ENCODE measurements at regions of chr6 and their contacts with region 1.

Region 1: DNA sequence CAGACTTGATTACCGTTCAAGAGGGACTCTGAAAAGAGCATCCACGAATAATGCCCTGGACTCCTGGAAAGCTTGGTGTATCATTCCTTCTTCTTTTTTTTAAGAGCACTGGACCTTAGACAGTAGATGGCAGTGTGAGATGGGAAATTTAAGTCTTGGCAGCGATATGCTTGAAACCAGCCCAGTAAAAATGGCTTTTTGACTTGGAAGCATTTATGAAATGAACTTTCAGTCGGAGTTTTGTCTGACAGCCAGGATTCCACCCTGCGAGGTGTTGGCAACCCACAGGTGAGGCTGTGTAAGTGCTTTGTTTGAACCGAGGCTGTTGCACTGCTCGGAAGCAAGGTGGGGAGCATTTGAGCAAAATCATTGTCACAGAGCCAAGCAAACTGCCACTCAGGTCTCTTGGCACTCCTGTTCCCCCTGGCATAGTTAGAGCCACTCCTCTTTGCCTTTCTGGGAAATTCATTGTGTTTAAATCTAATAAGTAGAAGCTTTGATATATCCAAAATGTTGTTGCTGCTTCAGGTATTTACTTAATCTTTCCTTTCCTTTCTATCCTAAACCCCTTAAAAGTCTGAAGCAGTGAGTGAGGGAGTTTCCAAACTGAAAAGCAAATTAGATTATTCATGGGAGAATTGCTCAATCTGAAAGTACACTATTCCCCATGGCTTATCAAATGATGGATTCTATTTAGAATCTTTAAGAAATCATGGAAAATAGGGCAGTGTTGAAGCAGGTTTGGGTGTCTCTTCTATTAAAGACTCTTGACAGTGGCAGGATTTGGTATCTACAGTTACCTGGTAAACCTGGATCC is 272.8 kb upstream of the SLC35B3 start:
- DNase-seq: peak; percentile 48
- ATAC-seq: peak; percentile 92
- H3K4me3 ChIP-seq: peak overlapping the region in 1 of 2 experiments; percentile 28; a peak in 2 of 4 replicates
- H3K27ac ChIP-seq: no peak overlapping the region
- H3K4me1 ChIP-seq: peaks cover 0 to 5% of the 10 kb centered on the region in 2 experiments; a peak in 2 of 4 replicates
- H3K27me3 ChIP-seq: no peaks in the 10 kb centered on the region
- CTCF ChIP-seq: peak; percentile 45 to 61 (median 49); a peak in 5 of 6 replicates
- POLR2A ChIP-seq: no peak
- RAD21 ChIP-seq: peak; percentile 76

Region 2: DNA sequence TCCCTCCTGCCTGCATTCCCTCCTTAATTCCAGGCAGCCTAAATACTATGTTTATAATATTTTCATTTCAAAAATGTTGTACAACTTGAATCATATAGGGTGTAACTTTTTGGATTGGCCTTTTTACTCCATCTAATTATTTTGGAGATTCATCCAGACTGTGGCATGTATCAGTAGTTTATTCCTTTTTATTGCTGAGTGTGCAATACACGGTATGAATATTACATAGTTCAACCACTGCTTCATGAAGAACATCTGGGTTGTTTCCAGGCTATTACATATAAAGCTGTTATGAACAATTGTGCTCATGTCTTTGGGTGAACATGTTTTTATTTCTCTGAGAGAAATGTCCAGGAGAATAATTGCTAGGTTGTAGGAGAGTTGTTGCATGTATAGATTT is 19.3 kb before region 1 on chr6:
- CTCF ChIA-PET with region 1: no interaction called
- POLR2A ChIA-PET with region 1: no interaction called
- RAD21 ChIA-PET with region 1: no interaction called
- intact Hi-C with region 1: no loop called
- DNase-seq: no peak
- ATAC-seq: no peak
- H3K4me3 ChIP-seq: no peak overlapping the region
- H3K27ac ChIP-seq: no peak overlapping the region
- H3K4me1 ChIP-seq: no peaks in the 10 kb centered on the region
- H3K27me3 ChIP-seq: no peaks in the 10 kb centered on the region
- CTCF ChIP-seq: no peak
- POLR2A ChIP-seq: no peak
- RAD21 ChIP-seq: no peak

Region 3: DNA sequence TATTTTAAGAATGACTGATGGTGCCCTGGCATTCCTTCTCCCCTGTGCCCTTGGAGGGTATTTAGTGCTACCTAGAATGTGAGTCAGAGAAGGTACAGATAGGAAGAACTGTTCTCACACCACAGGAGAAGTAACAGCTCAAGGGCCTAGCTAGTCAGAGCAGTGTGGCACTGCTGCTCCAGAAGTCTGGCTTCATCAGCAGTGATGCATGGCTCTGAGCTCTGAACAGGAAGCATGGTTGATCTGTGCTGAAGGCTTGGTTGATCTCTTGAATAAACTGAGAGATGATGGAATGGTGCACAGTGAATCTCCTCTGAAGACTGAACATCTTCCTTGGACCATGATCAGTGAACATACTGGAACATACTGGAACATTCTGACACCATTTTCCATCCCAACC is 152.5 kb after region 1 on chr6:
- CTCF ChIA-PET with region 1: no interaction called
- POLR2A ChIA-PET with region 1: no interaction called
- RAD21 ChIA-PET with region 1: no interaction called
- intact Hi-C with region 1: no loop called
- DNase-seq: no peak
- ATAC-seq: no peak
- H3K4me3 ChIP-seq: no peak overlapping the region
- H3K27ac ChIP-seq: no peak overlapping the region
- H3K4me1 ChIP-seq: no peaks in the 10 kb centered on the region
- H3K27me3 ChIP-seq: no peaks in the 10 kb centered on the region
- CTCF ChIP-seq: no peak
- POLR2A ChIP-seq: no peak
- RAD21 ChIP-seq: no peak

Region 4: DNA sequence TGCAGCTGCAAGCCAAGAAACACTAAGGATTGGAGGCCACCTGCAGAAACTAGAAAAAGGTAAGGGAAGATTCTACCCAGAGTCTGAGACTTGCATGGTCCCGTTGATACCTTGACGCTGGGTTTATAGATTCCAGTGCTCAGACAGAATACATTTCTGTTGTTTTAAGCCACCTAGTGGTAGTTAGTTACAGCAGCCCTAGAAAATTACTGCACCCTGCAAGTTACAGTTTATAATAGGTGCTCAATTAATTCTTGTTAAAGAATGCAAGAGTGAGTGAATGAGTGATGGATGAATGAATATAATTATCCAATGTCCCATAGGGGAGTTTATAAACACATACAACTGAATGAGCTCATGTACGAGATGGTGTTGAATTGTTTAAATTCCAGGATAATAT is 180.3 kb after region 1 on chr6:
- CTCF ChIA-PET with region 1: no interaction called
- POLR2A ChIA-PET with region 1: no interaction called
- RAD21 ChIA-PET with region 1: no interaction called
- intact Hi-C with region 1: loop called (anchors 5 kb)
- DNase-seq: peak; percentile 12
- ATAC-seq: peak; percentile 80
- H3K4me3 ChIP-seq: no peak overlapping the region
- H3K27ac ChIP-seq: no peak overlapping the region
- H3K4me1 ChIP-seq: no peaks in the 10 kb centered on the region
- H3K27me3 ChIP-seq: no peaks in the 10 kb centered on the region
- CTCF ChIP-seq: peak; percentile 26 to 64 (median 50); a peak in 5 of 6 replicates
- POLR2A ChIP-seq: no peak
- RAD21 ChIP-seq: peak; percentile 61

Measured in HCT116 (cell line).